Lower leg skin (tissue), 4 donors: ENCODE measurements at regions of chr12 and their contacts with region 1.

Region 1: DNA sequence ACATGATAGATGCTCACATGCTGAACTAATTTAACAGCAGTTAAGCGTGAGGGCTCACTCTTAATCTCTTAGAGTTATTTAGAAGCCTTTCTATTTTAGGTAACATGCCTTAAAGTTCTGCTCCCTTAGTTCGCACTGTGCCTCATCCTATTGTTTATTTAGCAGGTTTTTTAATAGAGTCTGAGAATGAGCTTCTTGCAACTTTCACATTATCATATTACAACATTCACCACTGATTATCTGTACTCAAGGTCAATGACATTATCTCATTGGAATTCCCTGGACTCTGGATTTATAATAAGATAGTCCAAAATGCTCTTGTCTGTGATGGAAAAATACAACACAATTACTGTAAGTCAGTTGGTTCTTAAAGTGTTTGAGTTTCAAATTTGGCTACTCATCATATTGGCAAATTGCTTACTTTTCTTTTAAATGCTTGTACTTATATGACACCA is 183.6 kb upstream of the SLC38A2 start:
- DNase-seq: no peak
- H3K4me3 ChIP-seq: no peak overlapping the region
- CTCF ChIP-seq: no peak
- POLR2A ChIP-seq: no peak

Region 2: GRCh38 chr12:46382964-46383653 is 173.0 kb before region 1 on chr12:
- intact Hi-C with region 1: loop called (anchors 10 kb)
- DNase-seq: peak; percentile 96 to 100
- H3K4me3 ChIP-seq: peak overlapping the region; percentile 53
- CTCF ChIP-seq: no peak
- POLR2A ChIP-seq: no peak